ENCODE measurements at regions of chr1 and their contacts with region 1.

Region 1: GRCh38 chr1:162276493-162276892 is 100.2 kb downstream of the SPATA46 start:
- DNase-seq: no peak
- ATAC-seq: no peak
- H3K4me3 ChIP-seq: no peak overlapping the region
- H3K27ac ChIP-seq: no peak overlapping the region
- H3K4me1 ChIP-seq: peaks cover 0 to 9% (median 0%) of the 10 kb centered on the region in 12 donors
- H3K27me3 ChIP-seq: peaks cover 0 to 3% (median 0%) of the 10 kb centered on the region in 9 donors
- CTCF ChIP-seq: peak in 10 of 12 donors; percentile 14 to 54 (median 39)
- POLR2A ChIP-seq: no peak

Region 2: GRCh38 chr1:162062542-162063015 is 213.9 kb before region 1 on chr1:
- intact Hi-C with region 1: loop called in 8 of 10 experiments (anchors 2 to 5 kb)
- DNase-seq: peak in 4 of 5 donors; percentile 9 to 58 (median 42)
- ATAC-seq: peak; percentile 81 to 90 (median 83)
- H3K4me3 ChIP-seq: no peak overlapping the region
- H3K27ac ChIP-seq: peak overlapping the region in 7 of 12 donors; percentile 12 to 68 (median 48)
- H3K4me1 ChIP-seq: peaks cover 0 to 17% (median 1%) of the 10 kb centered on the region in 12 donors
- H3K27me3 ChIP-seq: peaks cover 0 to 17% (median 0%) of the 10 kb centered on the region in 9 donors
- CTCF ChIP-seq: no peak
- POLR2A ChIP-seq: no peak

Region 3: GRCh38 chr1:162218975-162219374 is 57.5 kb before region 1 on chr1:
- intact Hi-C with region 1: no loop called
- DNase-seq: no peak
- ATAC-seq: peak in 2 of 4 donors; percentile 26 to 47
- H3K4me3 ChIP-seq: no peak overlapping the region
- H3K27ac ChIP-seq: no peak overlapping the region
- H3K4me1 ChIP-seq: peaks cover 0 to 29% (median 9%) of the 10 kb centered on the region in 12 donors
- H3K27me3 ChIP-seq: no peaks in the 10 kb centered on the region
- CTCF ChIP-seq: no peak
- POLR2A ChIP-seq: no peak

Region 4: GRCh38 chr1:162303002-162303344 is 26.5 kb after region 1 on chr1:
- intact Hi-C with region 1: no loop called
- DNase-seq: no peak
- ATAC-seq: no peak
- H3K4me3 ChIP-seq: no peak overlapping the region
- H3K27ac ChIP-seq: no peak overlapping the region
- H3K4me1 ChIP-seq: no peaks in the 10 kb centered on the region
- H3K27me3 ChIP-seq: no peaks in the 10 kb centered on the region
- CTCF ChIP-seq: no peak
- POLR2A ChIP-seq: no peak

Region 5: DNA sequence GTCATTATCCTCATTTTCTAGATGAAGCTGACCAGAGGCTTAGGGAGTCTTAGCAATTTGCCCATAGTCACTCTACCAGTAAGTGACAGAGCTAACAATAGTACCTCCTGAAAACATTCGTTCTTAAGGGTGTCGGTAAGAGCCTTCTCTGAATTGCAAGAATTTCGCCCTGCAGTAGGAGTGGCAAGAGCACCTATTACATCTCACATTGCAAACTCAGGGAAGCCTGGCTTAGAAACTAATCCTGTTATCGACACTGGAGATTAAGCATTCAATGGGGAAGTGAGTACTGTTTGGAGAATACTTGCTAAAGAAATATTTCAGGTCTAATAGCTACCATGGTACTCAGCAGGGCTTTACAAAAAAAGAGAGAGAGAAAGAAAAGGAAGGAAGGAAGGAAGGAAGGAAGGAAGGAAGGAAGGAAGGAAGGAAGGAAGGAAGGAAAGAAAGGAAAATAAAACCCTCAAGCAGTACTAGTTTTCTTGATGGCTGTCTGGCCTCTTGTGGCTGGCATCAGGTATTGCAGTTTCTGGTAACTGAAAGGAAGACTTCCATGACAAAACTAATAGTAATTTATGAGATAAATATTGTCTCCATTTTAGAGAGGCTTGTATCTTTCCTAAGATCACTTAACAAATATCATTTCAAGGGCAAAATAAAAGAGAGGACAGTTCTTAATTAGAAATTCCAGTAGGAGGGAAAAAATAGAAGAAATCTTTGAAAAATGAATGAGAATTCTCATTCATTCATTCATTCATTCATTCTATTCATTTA is 115.5 kb after region 1 on chr1:
- intact Hi-C with region 1: loop called in 4 of 10 experiments (anchors 5 to 10 kb)
- DNase-seq: no peak
- ATAC-seq: peak in 1 of 4 donors; percentile 60
- H3K4me3 ChIP-seq: no peak overlapping the region
- H3K27ac ChIP-seq: no peak overlapping the region
- H3K4me1 ChIP-seq: peaks cover 0 to 4% (median 0%) of the 10 kb centered on the region in 12 donors
- H3K27me3 ChIP-seq: peaks cover 0 to 21% (median 0%) of the 10 kb centered on the region in 9 donors
- CTCF ChIP-seq: peak; percentile 67 to 87 (median 78)
- POLR2A ChIP-seq: no peak